Caco-2 (cell line): ENCODE measurements at regions of chr4 and their contacts with region 1.

Region 1: GRCh38 chr4:74793757-74794340 is 474 bp downstream of the BTC start:
- DNase-seq: peak; percentile 57 to 64
- H3K4me3 ChIP-seq: peak overlapping the region; percentile 43
- H3K4me3 Mint-ChIP-seq: peak overlapping the region; percentile 89
- H3K27ac Mint-ChIP-seq: peak overlapping the region; percentile 54
- H3K4me1 ChIP-seq: no peaks in the 10 kb centered on the region
- H3K4me1 Mint-ChIP-seq: peaks cover 7% of the 10 kb centered on the region
- H3K27me3 ChIP-seq: 0 out of 2 replicates have a peak, but pooled peaks cover 1% of the 10 kb centered on the region
- H3K27me3 Mint-ChIP-seq: peaks cover 26% of the 10 kb centered on the region
- CTCF ChIP-seq: peak; percentile 12 to 72

Region 2: DNA sequence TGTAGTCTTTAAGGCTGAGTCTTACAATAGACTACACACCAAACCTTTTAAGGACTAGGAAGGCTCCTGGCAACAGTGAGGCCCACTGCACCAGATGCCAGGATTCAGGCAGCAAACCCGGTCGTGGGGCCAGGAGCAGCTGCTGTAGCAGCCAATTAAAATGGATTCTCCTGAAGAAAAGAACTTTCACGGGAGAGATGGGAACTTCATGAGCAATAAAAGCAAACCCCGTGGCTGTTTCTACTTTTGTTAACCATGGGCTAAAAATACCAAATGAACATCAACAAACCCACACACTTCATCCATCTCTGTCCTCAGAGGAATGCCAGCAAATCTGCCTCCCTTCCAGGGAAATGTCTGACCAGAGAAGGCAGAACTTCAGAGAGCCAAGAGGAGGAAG is 100.9 kb before region 1 on chr4:
- CTCF ChIA-PET with region 1: no interaction called
- POLR2A ChIA-PET with region 1: no interaction called
- intact Hi-C with region 1: loop called (anchors 5 kb)
- DNase-seq: no peak
- H3K4me3 ChIP-seq: no peak overlapping the region
- H3K4me3 Mint-ChIP-seq: no peak overlapping the region
- H3K27ac Mint-ChIP-seq: no peak overlapping the region
- H3K4me1 ChIP-seq: no peaks in the 10 kb centered on the region
- H3K4me1 Mint-ChIP-seq: no peaks in the 10 kb centered on the region
- H3K27me3 ChIP-seq: no peaks in the 10 kb centered on the region
- H3K27me3 Mint-ChIP-seq: peaks cover 10% of the 10 kb centered on the region
- CTCF ChIP-seq: no peak